ENCODE measurements at regions of chr13 and their contacts with region 1.

Region 1: DNA sequence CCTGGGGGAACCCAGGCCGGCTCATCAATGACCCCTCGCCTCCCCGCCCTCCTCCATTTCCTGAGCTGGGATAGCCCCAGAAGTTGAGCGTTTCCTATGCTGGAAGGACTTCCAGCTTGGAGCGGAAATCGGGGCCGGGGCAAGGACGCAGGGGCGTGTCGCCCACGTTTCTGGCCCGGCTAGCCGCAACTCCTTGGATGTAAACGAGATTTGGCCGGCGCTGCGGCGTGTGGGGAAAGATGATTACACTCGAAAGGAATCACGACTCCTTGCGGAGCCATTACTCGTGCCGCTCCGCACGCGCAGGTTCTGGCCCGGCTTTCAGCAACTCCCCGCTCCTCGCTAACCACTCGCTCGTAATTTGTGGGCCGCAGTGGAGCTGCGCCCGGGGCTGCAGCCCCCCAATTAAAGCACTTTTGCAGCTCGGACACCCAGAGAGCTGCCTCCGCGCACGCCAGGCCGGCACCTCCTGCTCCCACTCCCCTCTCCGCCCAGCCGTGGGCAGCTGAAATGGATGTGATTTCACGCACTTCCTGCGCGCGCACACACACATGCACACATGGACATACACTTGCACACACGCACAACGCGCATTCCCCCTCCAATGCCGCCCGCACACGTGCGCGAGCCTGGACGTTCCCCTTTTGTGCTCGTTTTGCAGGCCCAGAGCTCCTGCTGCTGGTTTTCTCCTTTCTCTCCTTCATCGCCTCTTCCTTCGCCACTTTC is 15.7 kb downstream of the ZIC5 start:
- DNase-seq: peak; percentile 19
- ATAC-seq: no peak
- H3K4me3 Mint-ChIP-seq: no peak overlapping the region
- H3K27ac Mint-ChIP-seq: no peak overlapping the region
- H3K4me1 Mint-ChIP-seq: peaks cover 28% of the 10 kb centered on the region
- H3K27me3 Mint-ChIP-seq: peaks cover 74% of the 10 kb centered on the region

Region 2: DNA sequence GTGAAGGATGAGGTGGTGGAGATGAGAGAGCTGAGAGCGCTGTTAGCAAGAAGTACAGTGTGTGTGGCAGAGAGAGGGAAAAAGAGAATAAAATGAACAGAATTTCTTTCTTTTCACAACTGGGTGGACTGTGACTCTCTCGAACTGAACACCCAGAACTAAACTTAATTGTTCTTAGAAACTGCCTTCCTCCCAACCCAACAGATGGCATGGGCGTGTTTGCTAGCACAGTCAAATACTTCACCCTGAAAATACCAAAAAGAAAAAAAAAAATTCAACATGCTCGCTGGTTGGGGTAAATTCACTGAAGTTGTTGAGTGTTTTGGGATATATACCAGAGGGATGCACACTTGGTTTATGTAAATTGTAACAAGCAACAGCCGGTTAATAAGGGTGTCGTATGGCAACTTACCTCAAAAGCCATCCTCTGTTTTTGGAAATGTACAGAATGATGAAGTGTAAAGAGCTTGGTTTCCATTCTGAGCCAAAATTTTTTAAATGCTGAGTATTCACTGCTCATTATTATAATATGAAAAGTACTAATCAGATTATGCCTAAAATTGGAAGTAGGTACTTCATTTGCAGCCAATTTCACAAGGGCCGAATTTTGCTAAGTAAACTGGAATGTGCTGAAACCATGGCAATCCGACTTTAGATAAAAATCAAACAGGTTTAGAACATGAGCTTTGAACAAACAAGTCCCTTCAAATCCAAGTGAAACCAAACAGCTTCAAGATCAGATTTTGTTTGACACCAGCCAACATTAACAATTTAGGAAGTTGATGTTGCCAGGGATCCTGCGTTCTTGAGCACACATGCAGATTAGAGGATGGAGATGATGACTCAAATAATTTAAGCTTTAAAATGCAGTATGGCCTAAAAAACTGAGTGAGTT is 100.1 kb before region 1 on chr13:
- CTCF ChIA-PET with region 1: no interaction called
- POLR2A ChIA-PET with region 1: no interaction called
- intact Hi-C with region 1: no loop called
- DNase-seq: no peak
- ATAC-seq: no peak
- H3K4me3 Mint-ChIP-seq: no peak overlapping the region
- H3K27ac Mint-ChIP-seq: no peak overlapping the region
- H3K4me1 Mint-ChIP-seq: peaks cover 9% of the 10 kb centered on the region
- H3K27me3 Mint-ChIP-seq: peaks cover 13% of the 10 kb centered on the region

Region 3: DNA sequence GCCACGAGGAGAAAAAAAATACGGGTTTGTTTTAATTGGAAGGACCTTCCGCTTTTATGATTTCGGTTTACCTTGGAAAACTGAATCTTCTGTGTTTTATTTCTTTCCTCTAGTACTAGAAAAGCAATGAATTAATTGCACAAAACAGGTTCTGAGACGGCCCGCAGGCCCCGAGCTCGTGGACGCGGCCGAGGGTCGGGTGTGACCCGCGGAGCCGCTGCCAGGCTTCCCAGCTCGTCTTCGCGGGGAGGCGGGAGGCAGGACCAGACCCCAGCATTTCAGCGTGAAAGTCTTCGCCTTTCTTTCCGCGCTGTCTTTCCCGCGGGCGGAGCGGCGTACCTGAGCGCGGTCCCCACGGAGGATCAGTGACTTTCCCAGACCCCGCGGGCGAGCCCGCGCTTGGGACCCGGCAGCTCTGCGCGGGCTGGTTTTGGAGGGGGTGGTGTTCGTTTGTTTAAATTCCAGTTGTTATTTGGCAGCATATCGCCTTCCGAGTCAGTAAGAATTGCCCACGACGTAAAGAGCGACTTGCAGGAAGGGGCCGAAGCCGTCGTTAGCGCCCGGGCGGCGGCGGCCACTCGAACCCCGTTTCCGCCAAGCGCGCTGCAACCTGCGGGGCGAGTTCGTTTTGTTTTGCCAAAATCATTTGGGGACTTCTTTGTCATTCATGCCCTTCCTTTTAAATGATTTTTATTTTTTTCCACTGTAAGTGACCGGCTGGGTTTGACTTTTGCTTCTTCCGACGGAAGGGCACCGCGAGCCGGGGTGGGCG is 60.5 kb before region 1 on chr13:
- CTCF ChIA-PET with region 1: interaction called, 3 read pairs
- POLR2A ChIA-PET with region 1: no interaction called
- intact Hi-C with region 1: loop called in 1 of 2 experiments (anchors 2 kb)
- DNase-seq: peak; percentile 24
- ATAC-seq: no peak
- H3K4me3 Mint-ChIP-seq: peak overlapping the region; percentile 60
- H3K27ac Mint-ChIP-seq: no peak overlapping the region
- H3K4me1 Mint-ChIP-seq: peaks cover 9% of the 10 kb centered on the region
- H3K27me3 Mint-ChIP-seq: peaks cover 45% of the 10 kb centered on the region

Region 4: DNA sequence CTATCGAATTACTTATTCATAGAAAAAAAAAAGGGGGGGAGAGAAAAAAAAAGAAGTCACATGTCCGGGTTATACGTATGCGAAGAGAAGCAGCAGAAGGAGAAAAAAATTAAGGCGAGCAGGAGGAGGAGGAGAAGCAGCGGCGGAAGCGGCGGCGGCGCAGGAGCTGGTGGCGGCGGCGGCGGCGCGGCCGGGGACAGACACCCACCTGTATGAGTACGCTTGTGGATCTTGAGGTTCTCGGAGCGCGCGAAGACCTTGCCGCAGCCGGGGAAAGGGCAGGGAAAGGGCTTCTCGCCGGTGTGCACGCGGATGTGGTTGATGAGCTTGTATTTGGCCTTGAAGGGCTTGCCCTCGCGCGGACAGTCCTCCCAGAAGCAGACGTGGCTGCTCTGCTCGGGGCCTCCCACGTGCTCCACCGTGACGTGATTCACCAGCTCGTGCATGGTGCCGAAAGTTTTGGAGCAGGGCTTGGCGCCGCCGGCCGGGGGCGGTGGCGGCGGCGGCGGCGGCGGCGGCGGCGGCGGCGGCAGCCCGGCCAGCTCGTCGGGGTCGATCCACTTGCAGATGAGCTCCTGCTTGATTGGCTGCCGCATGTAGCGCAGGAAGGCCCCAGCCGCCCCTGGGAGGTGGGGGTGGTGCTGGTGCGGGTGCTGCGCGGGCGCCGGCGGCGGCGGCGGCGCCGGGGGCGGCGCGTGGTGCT is 14.2 kb after region 1 on chr13:
- CTCF ChIA-PET with region 1: interaction called, 5 read pairs
- POLR2A ChIA-PET with region 1: no interaction called
- intact Hi-C with region 1: loop called (anchors 1 kb)
- DNase-seq: peak; percentile 63
- ATAC-seq: peak; percentile 54
- H3K4me3 Mint-ChIP-seq: peak overlapping the region; percentile 72
- H3K27ac Mint-ChIP-seq: no peak overlapping the region
- H3K4me1 Mint-ChIP-seq: peaks cover 17% of the 10 kb centered on the region
- H3K27me3 Mint-ChIP-seq: peaks cover 64% of the 10 kb centered on the region

Region 5: DNA sequence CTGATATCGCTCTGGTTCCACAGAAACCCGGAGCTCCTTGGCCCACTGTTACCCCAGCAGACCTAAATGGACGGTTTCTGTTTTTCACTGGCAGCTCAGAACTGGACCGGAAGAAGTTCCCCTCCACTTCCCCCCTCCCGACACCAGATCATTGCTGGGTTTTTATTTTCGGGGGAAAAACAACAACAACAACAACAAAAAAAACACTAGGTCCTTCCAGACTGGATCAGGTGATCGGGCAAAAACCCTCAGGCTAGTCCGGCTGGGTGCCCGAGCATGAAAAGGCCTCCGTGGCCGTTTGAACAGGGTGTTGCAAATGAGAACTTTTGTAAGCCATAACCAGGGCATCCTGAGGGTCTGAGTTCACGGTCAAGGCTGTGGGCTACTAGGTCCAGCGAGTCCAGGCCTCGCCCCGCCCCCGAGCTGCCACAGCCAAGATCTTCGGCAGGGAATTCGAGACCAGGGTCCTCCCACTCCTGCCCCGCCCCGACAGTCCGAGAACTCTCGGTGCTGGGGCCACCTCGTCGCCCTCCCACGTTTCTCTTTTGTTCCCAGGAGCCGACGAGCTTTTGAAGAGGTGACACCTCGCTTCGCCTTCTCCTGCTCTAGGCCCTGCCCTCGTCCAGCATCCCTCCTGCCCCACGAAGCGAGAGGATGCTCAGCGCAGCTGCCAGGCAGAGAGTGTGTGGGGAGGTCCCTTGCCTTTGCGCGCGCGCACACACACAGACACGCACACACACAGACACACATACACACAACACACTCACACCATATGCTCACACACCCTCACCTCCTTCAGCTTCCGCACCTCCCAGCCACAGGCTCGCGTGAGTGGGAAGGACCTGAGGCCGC is 34.4 kb after region 1 on chr13:
- CTCF ChIA-PET with region 1: interaction called, 4 read pairs
- POLR2A ChIA-PET with region 1: no interaction called
- intact Hi-C with region 1: loop called (anchors 1 to 5 kb)
- DNase-seq: peak; percentile 31
- ATAC-seq: peak; percentile 73
- H3K4me3 Mint-ChIP-seq: peak overlapping the region; percentile 6
- H3K27ac Mint-ChIP-seq: no peak overlapping the region
- H3K4me1 Mint-ChIP-seq: peaks cover 27% of the 10 kb centered on the region
- H3K27me3 Mint-ChIP-seq: peaks cover 86% of the 10 kb centered on the region

Region 6: GRCh38 chr13:99995589-99996380 is 39.9 kb after region 1 on chr13:
- CTCF ChIA-PET with region 1: no interaction called
- POLR2A ChIA-PET with region 1: interaction called, 3 read pairs
- intact Hi-C with region 1: loop called (anchors 1 to 5 kb)
- DNase-seq: peak; percentile 7
- ATAC-seq: no peak
- H3K4me3 Mint-ChIP-seq: no peak overlapping the region
- H3K27ac Mint-ChIP-seq: no peak overlapping the region
- H3K4me1 Mint-ChIP-seq: peaks cover 14% of the 10 kb centered on the region
- H3K27me3 Mint-ChIP-seq: peaks cover 74% of the 10 kb centered on the region